ENCODE measurements at regions of chr14 and their contacts with region 1.

Region 1: GRCh38 chr14:89899917-89900663 is 54.4 kb downstream of the EFCAB11 start:
- DNase-seq: peak in 1 of 2 experiments; percentile 12
- H3K4me3 ChIP-seq: no peak overlapping the region
- H3K4me3 Mint-ChIP-seq: no peak overlapping the region
- H3K27ac Mint-ChIP-seq: no peak overlapping the region
- H3K4me1 ChIP-seq: no peaks in the 10 kb centered on the region
- H3K4me1 Mint-ChIP-seq: no peaks in the 10 kb centered on the region
- H3K27me3 ChIP-seq: no peaks in the 10 kb centered on the region
- H3K27me3 Mint-ChIP-seq: no peaks in the 10 kb centered on the region
- CTCF ChIP-seq: peak; percentile 22 to 61

Region 2: DNA sequence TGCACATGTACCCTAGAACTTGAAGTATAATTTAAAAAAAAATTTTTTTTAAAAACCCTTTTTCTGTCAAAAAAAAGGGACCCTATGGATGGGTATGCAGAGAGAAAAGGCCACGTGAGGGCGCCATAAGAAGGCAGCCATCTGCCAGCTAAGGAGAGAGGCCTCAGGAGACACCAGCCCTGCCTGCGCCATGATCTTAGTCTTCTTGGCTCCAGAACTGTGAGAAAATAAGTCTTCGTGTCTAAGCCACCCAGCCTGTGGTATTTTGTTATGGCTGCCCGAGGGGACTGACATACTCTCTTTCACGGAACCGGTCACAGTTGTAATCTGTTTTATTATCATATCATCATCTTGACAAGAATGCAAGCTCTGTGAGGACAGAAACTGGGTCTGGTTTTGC is 120.4 kb before region 1 on chr14:
- CTCF ChIA-PET with region 1: no interaction called
- POLR2A ChIA-PET with region 1: no interaction called
- intact Hi-C with region 1: loop called (anchors 5 kb)
- DNase-seq: no peak
- H3K4me3 ChIP-seq: no peak overlapping the region
- H3K4me3 Mint-ChIP-seq: no peak overlapping the region
- H3K27ac Mint-ChIP-seq: no peak overlapping the region
- H3K4me1 ChIP-seq: no peaks in the 10 kb centered on the region
- H3K4me1 Mint-ChIP-seq: no peaks in the 10 kb centered on the region
- H3K27me3 ChIP-seq: no peaks in the 10 kb centered on the region
- H3K27me3 Mint-ChIP-seq: no peaks in the 10 kb centered on the region
- CTCF ChIP-seq: no peak

Region 3: DNA sequence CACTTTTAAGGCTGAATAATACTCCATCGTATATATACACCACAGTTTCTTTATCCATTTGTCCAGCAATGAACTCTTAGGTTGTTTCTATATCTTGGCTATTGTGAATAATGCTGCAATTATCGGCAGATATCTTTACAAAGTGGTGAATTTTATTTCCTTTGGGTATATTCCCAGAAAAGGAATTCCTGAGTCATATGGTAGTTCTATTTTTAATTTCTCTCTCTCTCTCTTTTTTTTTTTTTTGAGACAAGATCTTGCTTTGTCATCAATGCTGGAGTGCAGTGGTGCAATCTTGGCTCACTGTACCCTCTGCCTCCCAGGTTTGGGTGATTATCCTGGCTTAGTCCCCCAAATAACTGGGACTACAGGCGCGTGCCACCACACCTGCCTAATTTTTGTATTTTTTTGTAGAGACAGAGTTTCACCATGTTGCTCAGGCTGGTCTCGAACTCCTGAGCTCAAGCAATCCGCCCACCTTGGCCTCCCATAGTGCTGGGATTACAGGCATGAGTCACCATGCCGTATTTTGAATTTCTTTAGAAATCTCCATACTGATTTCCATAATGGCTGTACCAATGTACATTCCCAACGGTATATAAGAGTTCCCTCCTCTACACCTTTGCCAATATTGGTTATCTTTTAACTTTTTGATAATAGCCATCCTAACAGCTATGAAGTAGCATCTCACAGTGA is 44.0 kb before region 1 on chr14:
- CTCF ChIA-PET with region 1: interaction called, 3 read pairs
- POLR2A ChIA-PET with region 1: no interaction called
- intact Hi-C with region 1: loop called (anchors 5 kb)
- DNase-seq: no peak
- H3K4me3 ChIP-seq: no peak overlapping the region
- H3K4me3 Mint-ChIP-seq: no peak overlapping the region
- H3K27ac Mint-ChIP-seq: no peak overlapping the region
- H3K4me1 ChIP-seq: peaks cover 22% of the 10 kb centered on the region
- H3K4me1 Mint-ChIP-seq: peaks cover 8% of the 10 kb centered on the region
- H3K27me3 ChIP-seq: no peaks in the 10 kb centered on the region
- H3K27me3 Mint-ChIP-seq: no peaks in the 10 kb centered on the region
- CTCF ChIP-seq: no peak